HepG2 (cell line): ENCODE measurements at regions of chr6 and their contacts with region 1.

Region 1: GRCh38 chr6:31827286-31828079 is at the start of gene HSPA1B:
- DNase-seq: peak; percentile 100
- ATAC-seq: peak; percentile 89
- H3K4me3 ChIP-seq: peak within 1 kb of the TSS; percentile 59 to 91 (median 86)
- H3K27ac ChIP-seq: peak within 1 kb of the TSS; percentile 68
- H3K4me1 ChIP-seq: peaks cover 44% of the 10 kb centered on the region
- H3K27me3 ChIP-seq: no peaks in the 10 kb centered on the region; a peak in 1 of 5 replicates
- CTCF ChIP-seq: peak; percentile 29
- EP300 ChIP-seq: peak in 1 of 2 experiments; percentile 82; a peak in 2 of 4 replicates
- POLR2A ChIP-seq: peak; percentile 100
- RAD21 ChIP-seq: peak; percentile 76
- total RNA-seq, gene HSPA1B: 186 and 189 TPM in 2 replicates

Region 2: DNA sequence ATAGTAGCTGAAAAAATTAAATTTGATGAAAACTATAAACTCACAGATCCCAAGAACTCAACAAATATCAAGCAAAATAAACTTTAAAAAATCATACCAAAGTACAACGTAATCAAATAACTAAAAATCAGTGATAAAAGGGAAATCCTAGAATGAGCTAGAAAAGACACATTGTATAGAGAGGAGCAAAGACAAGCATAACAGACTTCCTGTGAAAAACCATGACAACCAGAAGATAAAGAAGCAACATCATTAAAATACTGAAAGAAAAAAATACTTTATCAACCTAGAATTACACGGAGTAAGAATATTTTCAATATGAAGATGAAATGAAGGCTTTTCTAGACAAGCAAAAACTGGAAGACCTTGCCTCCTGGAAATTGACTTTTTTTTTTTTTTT is 807.4 kb before region 1 on chr6:
- CTCF ChIA-PET with region 1: no interaction called
- POLR2A ChIA-PET with region 1: no interaction called
- in situ Hi-C with region 1: no loop called
- intact Hi-C with region 1: no loop called
- DNase-seq: no peak
- ATAC-seq: no peak
- H3K4me3 ChIP-seq: no peak overlapping the region
- H3K27ac ChIP-seq: no peak overlapping the region
- H3K4me1 ChIP-seq: no peaks in the 10 kb centered on the region
- H3K27me3 ChIP-seq: no peaks in the 10 kb centered on the region; a peak in 1 of 5 replicates
- CTCF ChIP-seq: no peak
- EP300 ChIP-seq: no peak
- POLR2A ChIP-seq: no peak
- RAD21 ChIP-seq: no peak

Region 3: GRCh38 chr6:31680840-31681671 is 146.4 kb before region 1 on chr6 and contains the start of gene LY6G5C:
- CTCF ChIA-PET with region 1: interaction called, 7 read pairs
- POLR2A ChIA-PET with region 1: interaction called, 6 read pairs
- in situ Hi-C with region 1: no loop called
- intact Hi-C with region 1: loop called (anchors 1 kb)
- DNase-seq: peak; percentile 72
- ATAC-seq: peak; percentile 67
- H3K4me3 ChIP-seq: peak within 1 kb of the TSS in 1 of 3 experiments; percentile 22; a peak in 1 of 6 replicates
- H3K27ac ChIP-seq: no peak within 1 kb of the TSS
- H3K4me1 ChIP-seq: peaks cover 26% of the 10 kb centered on the region
- H3K27me3 ChIP-seq: no peaks in the 10 kb centered on the region
- CTCF ChIP-seq: peak; percentile 97
- EP300 ChIP-seq: no peak
- POLR2A ChIP-seq: no peak
- RAD21 ChIP-seq: peak; percentile 97
- total RNA-seq, gene LY6G5C: 0.33 TPM in 1 of 2 replicates, not detected in the other

Region 4: GRCh38 chr6:31729515-31729978 is 97.9 kb before region 1 on chr6:
- CTCF ChIA-PET with region 1: interaction called, 4 read pairs
- POLR2A ChIA-PET with region 1: interaction called, 102 read pairs
- in situ Hi-C with region 1: no loop called
- intact Hi-C with region 1: no loop called
- DNase-seq: peak; percentile 86
- ATAC-seq: peak; percentile 77
- H3K4me3 ChIP-seq: peak overlapping the region; percentile 60 to 79 (median 72)
- H3K27ac ChIP-seq: peak overlapping the region; percentile 72
- H3K4me1 ChIP-seq: peaks cover 56% of the 10 kb centered on the region
- H3K27me3 ChIP-seq: no peaks in the 10 kb centered on the region
- CTCF ChIP-seq: peak; percentile 96
- EP300 ChIP-seq: 0 out of 4 replicates have a peak, but pooled peaks of 1 of the 2 experiments have one; percentile 4
- POLR2A ChIP-seq: peak in 1 of 2 experiments; percentile 74; a peak in 2 of 4 replicates
- RAD21 ChIP-seq: peak; percentile 99

Region 5: GRCh38 chr6:31776989-31777666 is 50.4 kb before region 1 on chr6 and contains the start of gene VWA7:
- CTCF ChIA-PET with region 1: interaction called, 16 read pairs
- POLR2A ChIA-PET with region 1: interaction called, 60 read pairs
- in situ Hi-C with region 1: loop called (anchors 5 kb)
- intact Hi-C with region 1: loop called (anchors 1 kb)
- DNase-seq: peak; percentile 85
- ATAC-seq: peak; percentile 65
- H3K4me3 ChIP-seq: peak within 1 kb of the TSS; percentile 45 to 72 (median 48)
- H3K27ac ChIP-seq: peak within 1 kb of the TSS; percentile 70
- H3K4me1 ChIP-seq: peaks cover 57% of the 10 kb centered on the region
- H3K27me3 ChIP-seq: no peaks in the 10 kb centered on the region
- CTCF ChIP-seq: peak; percentile 26
- EP300 ChIP-seq: peak in 1 of 2 experiments; percentile 45; a peak in 1 of 4 replicates
- POLR2A ChIP-seq: no peak; a peak in 1 of 4 replicates
- RAD21 ChIP-seq: no peak
- total RNA-seq, gene VWA7: 0.79 and 0.86 TPM in 2 replicates

Region 6: DNA sequence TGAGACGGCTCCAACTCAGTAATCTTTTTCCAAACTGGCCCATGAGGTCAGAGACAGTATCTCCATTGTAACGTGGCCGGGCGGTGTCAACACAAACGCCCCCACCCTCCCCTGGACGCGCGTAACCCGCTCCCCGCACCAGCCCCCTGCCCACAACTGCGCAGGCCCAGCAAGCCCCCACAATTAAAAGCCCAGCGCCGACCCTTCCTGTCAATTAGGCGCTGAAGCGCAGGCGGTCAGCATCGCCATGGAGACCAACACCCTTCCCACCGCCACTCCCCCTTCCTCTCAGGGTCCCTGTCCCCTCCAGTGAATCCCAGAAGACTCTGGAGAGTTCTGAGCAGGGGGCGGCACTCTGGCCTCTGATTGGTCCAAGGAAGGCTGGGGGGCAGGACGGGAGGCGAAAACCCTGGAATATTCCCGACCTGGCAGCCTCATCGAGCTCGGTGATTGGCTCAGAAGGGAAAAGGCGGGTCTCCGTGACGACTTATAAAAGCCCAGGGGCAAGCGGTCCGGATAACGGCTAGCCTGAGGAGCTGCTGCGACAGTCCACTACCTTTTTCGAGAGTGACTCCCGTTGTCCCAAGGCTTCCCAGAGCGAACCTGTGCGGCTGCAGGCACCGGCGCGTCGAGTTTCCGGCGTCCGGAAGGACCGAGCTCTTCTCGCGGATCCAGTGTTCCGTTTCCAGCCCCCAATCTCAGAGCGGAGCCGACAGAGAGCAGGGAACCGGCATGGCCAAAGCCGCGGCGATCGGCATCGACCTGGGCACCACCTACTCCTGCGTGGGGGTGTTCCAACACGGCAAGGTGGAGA is 12.3 kb before region 1 on chr6 and contains the starts of genes HSPA1A and HSPA1L:
- CTCF ChIA-PET with region 1: no interaction called
- POLR2A ChIA-PET with region 1: interaction called, 102 read pairs
- in situ Hi-C with region 1: no loop called
- intact Hi-C with region 1: no loop called
- DNase-seq: peak; percentile 95
- ATAC-seq: peak; percentile 64
- H3K4me3 ChIP-seq: peak within 1 kb of the TSS; percentile 54 to 71 (median 55)
- H3K27ac ChIP-seq: peak within 1 kb of the TSS; percentile 95
- H3K4me1 ChIP-seq: peaks cover 35% of the 10 kb centered on the region
- H3K27me3 ChIP-seq: no peaks in the 10 kb centered on the region
- CTCF ChIP-seq: no peak
- EP300 ChIP-seq: peak in 1 of 2 experiments; percentile 63; a peak in 2 of 4 replicates
- POLR2A ChIP-seq: peak; percentile 99 to 100
- RAD21 ChIP-seq: peak; percentile 22; the same call in 1 of the 2 replicates
- total RNA-seq, gene HSPA1A: 83.5 and 85.0 TPM in 2 replicates
- total RNA-seq, gene HSPA1L: 0.55 and 0.94 TPM in 2 replicates